CD14-positive monocyte (primary cell): ENCODE measurements at regions of chr9 and their contacts with region 1.

Region 1: GRCh38 chr9:130866474-130866965 is 30.1 kb downstream of the QRFP start:
- DNase-seq: peak; percentile 39 to 69 (median 50)
- H3K4me3 ChIP-seq: no peak overlapping the region
- H3K4me3 Mint-ChIP-seq: no peak overlapping the region
- H3K27ac ChIP-seq: no peak overlapping the region
- H3K27ac Mint-ChIP-seq: peak overlapping the region in 3 of 7 donors; percentile 36 to 81 (median 42)
- H3K4me1 ChIP-seq: no peaks in the 10 kb centered on the region
- H3K4me1 Mint-ChIP-seq: no peaks in the 10 kb centered on the region
- H3K27me3 ChIP-seq: no peaks in the 10 kb centered on the region
- H3K27me3 Mint-ChIP-seq: no peaks in the 10 kb centered on the region
- CTCF ChIP-seq: peak; percentile 90

Region 2: GRCh38 chr9:130042833-130043653 is 823.5 kb before region 1 on chr9 and contains the start of gene FNBP1:
- intact Hi-C with region 1: no loop called
- DNase-seq: peak; percentile 68 to 76 (median 71)
- H3K4me3 ChIP-seq: peak within 1 kb of the TSS; percentile 92 to 97 (median 96)
- H3K4me3 Mint-ChIP-seq: peak within 1 kb of the TSS; percentile 100
- H3K27ac ChIP-seq: peak within 1 kb of the TSS; percentile 85 to 90
- H3K27ac Mint-ChIP-seq: peak within 1 kb of the TSS; percentile 94 to 100 (median 96)
- H3K4me1 ChIP-seq: peaks cover 64 to 77% of the 10 kb centered on the region in 2 donors
- H3K4me1 Mint-ChIP-seq: peaks cover 58% of the 10 kb centered on the region
- H3K27me3 ChIP-seq: no peaks in the 10 kb centered on the region
- H3K27me3 Mint-ChIP-seq: no peaks in the 10 kb centered on the region
- CTCF ChIP-seq: no peak
- polyA plus RNA-seq, gene FNBP1: 37.6 to 60.7 (median 51.4) TPM

Region 3: GRCh38 chr9:130659699-130660248 is 206.7 kb before region 1 on chr9:
- intact Hi-C with region 1: no loop called
- DNase-seq: no peak
- H3K4me3 ChIP-seq: no peak overlapping the region
- H3K4me3 Mint-ChIP-seq: peak overlapping the region in 1 of 2 donors; percentile 76
- H3K27ac ChIP-seq: no peak overlapping the region
- H3K27ac Mint-ChIP-seq: no peak overlapping the region
- H3K4me1 ChIP-seq: peaks cover 3 to 5% of the 10 kb centered on the region in 2 donors
- H3K4me1 Mint-ChIP-seq: peaks cover 3% of the 10 kb centered on the region
- H3K27me3 ChIP-seq: peaks cover 53 to 84% of the 10 kb centered on the region in 2 donors
- H3K27me3 Mint-ChIP-seq: peaks cover 79 to 99% (median 80%) of the 10 kb centered on the region in 3 donors
- CTCF ChIP-seq: no peak

Region 4: DNA sequence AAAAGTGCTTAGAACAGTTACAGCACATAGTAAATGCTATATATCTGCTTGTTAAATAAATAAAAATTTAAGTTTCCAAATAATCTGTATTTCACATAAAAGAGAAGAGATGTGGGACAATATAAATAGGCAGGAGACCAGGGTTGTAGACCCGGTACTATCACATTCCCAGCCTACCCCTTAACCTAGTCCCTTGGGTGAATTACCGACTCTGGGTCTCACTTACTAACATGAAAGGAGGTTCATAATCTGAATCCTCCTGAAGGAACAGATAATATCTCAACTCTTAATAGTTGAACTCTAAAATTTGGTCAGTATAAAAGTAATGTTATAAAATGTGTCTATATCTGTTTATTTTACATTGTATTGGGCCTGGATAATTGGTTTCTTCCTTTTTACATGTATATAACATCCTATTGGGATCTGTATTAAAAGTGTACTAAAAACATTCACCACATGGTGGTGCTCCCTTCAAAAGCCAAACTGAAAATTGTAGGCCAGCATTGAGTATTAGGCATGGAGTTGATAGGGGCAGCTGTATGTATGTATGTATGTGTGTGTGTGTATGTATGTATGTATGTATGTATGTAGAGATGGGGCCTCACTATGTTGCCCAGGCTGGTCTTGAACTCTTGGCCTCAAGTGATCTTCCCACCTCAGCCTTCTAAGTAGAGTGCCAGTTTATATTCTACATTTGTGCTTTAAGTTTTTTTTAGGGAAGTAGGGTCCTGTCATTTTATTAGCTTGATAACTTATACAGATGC is 95.7 kb before region 1 on chr9:
- intact Hi-C with region 1: loop called (anchors 5 to 10 kb)
- DNase-seq: peak in 2 of 3 donors; percentile 5 to 6
- H3K4me3 ChIP-seq: no peak overlapping the region
- H3K4me3 Mint-ChIP-seq: no peak overlapping the region
- H3K27ac ChIP-seq: no peak overlapping the region
- H3K27ac Mint-ChIP-seq: no peak overlapping the region
- H3K4me1 ChIP-seq: peaks cover 29 to 30% of the 10 kb centered on the region in 2 donors
- H3K4me1 Mint-ChIP-seq: peaks cover 38% of the 10 kb centered on the region
- H3K27me3 ChIP-seq: no peaks in the 10 kb centered on the region
- H3K27me3 Mint-ChIP-seq: no peaks in the 10 kb centered on the region
- CTCF ChIP-seq: peak; percentile 67

Region 5: GRCh38 chr9:130940693-130941576 is 74.4 kb after region 1 on chr9:
- intact Hi-C with region 1: loop called (anchors 5 to 10 kb)
- DNase-seq: peak; percentile 9 to 42 (median 37)
- H3K4me3 ChIP-seq: no peak overlapping the region
- H3K4me3 Mint-ChIP-seq: peak overlapping the region in 1 of 2 donors; percentile 88
- H3K27ac ChIP-seq: no peak overlapping the region
- H3K27ac Mint-ChIP-seq: no peak overlapping the region
- H3K4me1 ChIP-seq: peaks cover 0 to 10% of the 10 kb centered on the region in 2 donors
- H3K4me1 Mint-ChIP-seq: peaks cover 8% of the 10 kb centered on the region
- H3K27me3 ChIP-seq: peaks cover 20 to 54% of the 10 kb centered on the region in 2 donors
- H3K27me3 Mint-ChIP-seq: peaks cover 46 to 73% (median 61%) of the 10 kb centered on the region in 3 donors
- CTCF ChIP-seq: peak; percentile 95

Region 6: GRCh38 chr9:130997925-130998596 is 131.5 kb after region 1 on chr9:
- intact Hi-C with region 1: loop called (anchors 2 to 5 kb)
- DNase-seq: peak; percentile 39 to 62 (median 42)
- H3K4me3 ChIP-seq: no peak overlapping the region
- H3K4me3 Mint-ChIP-seq: peak overlapping the region in 1 of 2 donors; percentile 44
- H3K27ac ChIP-seq: no peak overlapping the region
- H3K27ac Mint-ChIP-seq: no peak overlapping the region
- H3K4me1 ChIP-seq: peaks cover 32 to 37% of the 10 kb centered on the region in 2 donors
- H3K4me1 Mint-ChIP-seq: peaks cover 8% of the 10 kb centered on the region
- H3K27me3 ChIP-seq: no peaks in the 10 kb centered on the region
- H3K27me3 Mint-ChIP-seq: peaks cover 2 to 14% (median 12%) of the 10 kb centered on the region in 3 donors
- CTCF ChIP-seq: peak; percentile 81

Region 7: GRCh38 chr9:131046581-131047202 is 180.2 kb after region 1 on chr9:
- intact Hi-C with region 1: loop called (anchors 5 kb)
- DNase-seq: peak; percentile 44 to 59 (median 58)
- H3K4me3 ChIP-seq: no peak overlapping the region
- H3K4me3 Mint-ChIP-seq: peak overlapping the region; percentile 49 to 65
- H3K27ac ChIP-seq: no peak overlapping the region
- H3K27ac Mint-ChIP-seq: no peak overlapping the region
- H3K4me1 ChIP-seq: peaks cover 8 to 10% of the 10 kb centered on the region in 2 donors
- H3K4me1 Mint-ChIP-seq: peaks cover 10% of the 10 kb centered on the region
- H3K27me3 ChIP-seq: no peaks in the 10 kb centered on the region
- H3K27me3 Mint-ChIP-seq: peaks cover 0 to 5% (median 0%) of the 10 kb centered on the region in 3 donors
- CTCF ChIP-seq: peak; percentile 96